ENCODE measurements at regions of chr2 and their contacts with region 1.

Region 1: DNA sequence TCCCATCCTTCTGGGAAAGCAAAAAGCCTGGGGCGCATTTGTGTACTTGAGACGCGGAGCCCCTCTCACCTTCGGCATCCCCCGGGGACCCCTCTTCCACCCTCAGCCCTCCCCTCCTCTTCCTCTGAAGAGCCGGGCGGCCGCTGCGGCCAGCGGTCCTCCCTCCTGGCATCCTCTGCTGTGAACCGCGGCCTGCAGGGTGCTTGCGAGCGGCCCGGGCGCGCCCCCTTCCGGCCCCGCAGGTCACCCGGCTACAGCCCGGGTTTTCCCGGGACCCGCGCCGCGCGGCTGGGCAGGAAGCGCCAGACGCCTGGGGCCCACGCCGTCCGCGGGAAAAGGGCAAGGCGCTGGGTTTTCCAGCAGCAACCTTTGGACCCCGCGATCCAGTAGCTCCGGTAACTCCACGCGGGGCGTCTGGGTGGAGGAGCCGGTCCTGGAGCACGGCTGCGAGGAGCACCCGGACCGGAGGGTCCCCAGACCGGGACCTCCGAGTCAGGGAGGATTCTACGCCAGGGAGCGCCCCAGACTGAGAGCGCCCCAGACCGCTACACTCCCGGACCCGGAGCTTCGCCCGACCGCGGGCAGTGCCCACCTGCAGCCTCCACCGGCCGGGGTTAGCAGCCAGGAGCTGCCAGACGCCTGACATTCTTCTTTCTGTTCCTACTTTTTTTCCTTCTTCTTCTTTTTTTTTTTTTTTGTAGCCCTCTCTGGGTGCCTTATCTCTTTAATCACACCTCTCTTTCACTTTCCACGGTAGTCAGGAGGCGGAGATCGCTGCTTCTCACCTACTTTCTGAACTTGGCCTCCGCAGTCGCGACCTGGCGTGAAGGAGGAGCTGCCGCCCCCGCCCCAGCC is at the start of gene IL18R1:
- DNase-seq: peak; percentile 58 to 80
- H3K4me3 ChIP-seq: peak within 1 kb of the TSS; percentile 89
- H3K27ac ChIP-seq: peak within 1 kb of the TSS; percentile 53
- H3K4me1 ChIP-seq: peaks cover 38% of the 10 kb centered on the region
- H3K27me3 ChIP-seq: no peaks in the 10 kb centered on the region
- CTCF ChIP-seq: peak; percentile 82
- total RNA-seq, gene IL18R1: 1.9 and 3.4 TPM in 2 replicates

Region 2: GRCh38 chr2:101751875-101752619 is 603.7 kb before region 1 on chr2:
- CTCF ChIA-PET with region 1: no interaction called
- POLR2A ChIA-PET with region 1: no interaction called
- intact Hi-C with region 1: no loop called
- DNase-seq: no peak
- H3K4me3 ChIP-seq: no peak overlapping the region
- H3K27ac ChIP-seq: peak overlapping the region; percentile 11; the same call in 1 of the 2 replicates
- H3K4me1 ChIP-seq: peaks cover 38% of the 10 kb centered on the region
- H3K27me3 ChIP-seq: no peaks in the 10 kb centered on the region
- CTCF ChIP-seq: no peak

Region 3: DNA sequence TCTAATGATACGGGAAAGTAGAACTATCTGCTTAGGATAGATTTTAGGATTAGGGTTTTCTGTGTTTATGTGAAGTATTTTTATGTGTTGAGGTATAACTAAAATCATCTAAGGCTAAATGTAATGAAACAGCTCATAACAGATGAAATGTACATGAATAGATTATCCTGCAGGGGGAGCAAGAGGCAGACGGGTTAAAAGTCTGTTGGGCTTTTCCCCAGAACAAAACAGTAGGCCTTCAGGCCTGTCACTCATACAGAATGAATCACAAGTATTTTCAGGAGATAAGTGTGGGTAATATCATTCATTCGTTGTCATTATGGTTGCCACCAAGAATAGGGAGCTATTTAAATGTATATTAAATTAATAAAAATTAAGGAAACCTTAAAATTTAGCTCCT is 471.9 kb before region 1 on chr2:
- CTCF ChIA-PET with region 1: no interaction called
- POLR2A ChIA-PET with region 1: no interaction called
- intact Hi-C with region 1: loop called (anchors 5 kb)
- DNase-seq: peak; percentile 7 to 41
- H3K4me3 ChIP-seq: no peak overlapping the region
- H3K27ac ChIP-seq: no peak overlapping the region
- H3K4me1 ChIP-seq: peaks cover 9% of the 10 kb centered on the region; the same call in 1 of the 2 replicates
- H3K27me3 ChIP-seq: no peaks in the 10 kb centered on the region
- CTCF ChIP-seq: peak; percentile 74

Region 4: GRCh38 chr2:102020596-102021181 is 335.1 kb before region 1 on chr2:
- CTCF ChIA-PET with region 1: no interaction called
- POLR2A ChIA-PET with region 1: no interaction called
- intact Hi-C with region 1: loop called (anchors 5 kb)
- DNase-seq: peak; percentile 53 to 77
- H3K4me3 ChIP-seq: no peak overlapping the region
- H3K27ac ChIP-seq: no peak overlapping the region
- H3K4me1 ChIP-seq: 0 out of 2 replicates have a peak, but pooled peaks cover 4% of the 10 kb centered on the region
- H3K27me3 ChIP-seq: no peaks in the 10 kb centered on the region
- CTCF ChIP-seq: peak; percentile 98

Region 5: GRCh38 chr2:102061962-102062795 is 293.6 kb before region 1 on chr2:
- CTCF ChIA-PET with region 1: interaction called, 12 read pairs
- POLR2A ChIA-PET with region 1: no interaction called
- intact Hi-C with region 1: no loop called
- DNase-seq: no peak
- H3K4me3 ChIP-seq: no peak overlapping the region
- H3K27ac ChIP-seq: no peak overlapping the region
- H3K4me1 ChIP-seq: peaks cover 45% of the 10 kb centered on the region
- H3K27me3 ChIP-seq: no peaks in the 10 kb centered on the region
- CTCF ChIP-seq: no peak

Region 6: GRCh38 chr2:102251042-102251848 is 104.5 kb before region 1 on chr2:
- CTCF ChIA-PET with region 1: interaction called, 4 read pairs
- POLR2A ChIA-PET with region 1: no interaction called
- intact Hi-C with region 1: loop called (anchors 1 kb)
- DNase-seq: peak in 1 of 2 experiments; percentile 69
- H3K4me3 ChIP-seq: peak overlapping the region; percentile 6; the same call in 1 of the 2 replicates
- H3K27ac ChIP-seq: no peak overlapping the region
- H3K4me1 ChIP-seq: peaks cover 9% of the 10 kb centered on the region
- H3K27me3 ChIP-seq: no peaks in the 10 kb centered on the region
- CTCF ChIP-seq: peak; percentile 48

Region 7: GRCh38 chr2:102342891-102343290 is 12.9 kb before region 1 on chr2:
- CTCF ChIA-PET with region 1: no interaction called
- POLR2A ChIA-PET with region 1: no interaction called
- intact Hi-C with region 1: no loop called
- DNase-seq: no peak
- H3K4me3 ChIP-seq: no peak overlapping the region
- H3K27ac ChIP-seq: no peak overlapping the region
- H3K4me1 ChIP-seq: peaks cover 18% of the 10 kb centered on the region
- H3K27me3 ChIP-seq: no peaks in the 10 kb centered on the region
- CTCF ChIP-seq: no peak

Region 8: DNA sequence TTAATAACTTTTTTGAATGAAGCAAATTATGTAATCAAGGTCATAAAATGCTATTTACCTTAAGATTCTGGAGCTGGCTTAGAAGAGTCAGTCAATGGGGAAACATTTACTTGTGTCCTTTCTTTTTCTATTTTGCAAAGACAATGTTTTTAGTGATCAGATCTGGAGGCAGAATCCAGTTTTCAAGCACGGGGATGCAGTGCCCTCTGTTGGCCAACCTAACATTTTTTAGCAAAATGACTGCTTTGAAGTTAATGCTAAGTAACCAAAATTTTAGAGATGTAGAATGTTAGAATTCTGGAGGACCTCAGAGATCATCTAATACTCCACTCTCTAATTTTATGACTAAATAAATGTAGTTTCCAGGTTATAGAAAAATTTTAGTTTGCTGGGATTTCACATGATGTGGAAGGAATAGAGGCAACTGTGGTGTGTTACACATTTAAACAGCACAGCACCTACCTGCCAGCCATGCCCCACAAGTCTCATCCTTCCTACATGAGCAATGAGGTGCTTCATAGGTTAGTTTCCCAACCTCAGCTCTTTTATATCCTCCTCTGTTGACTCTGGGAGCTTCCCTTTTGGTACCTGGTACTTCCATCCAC is 93.7 kb after region 1 on chr2:
- CTCF ChIA-PET with region 1: interaction called, 11 read pairs
- POLR2A ChIA-PET with region 1: no interaction called
- intact Hi-C with region 1: no loop called
- DNase-seq: peak in 1 of 2 experiments; percentile 41
- H3K4me3 ChIP-seq: no peak overlapping the region
- H3K27ac ChIP-seq: no peak overlapping the region
- H3K4me1 ChIP-seq: no peaks in the 10 kb centered on the region
- H3K27me3 ChIP-seq: no peaks in the 10 kb centered on the region
- CTCF ChIP-seq: peak; percentile 83

Region 9: DNA sequence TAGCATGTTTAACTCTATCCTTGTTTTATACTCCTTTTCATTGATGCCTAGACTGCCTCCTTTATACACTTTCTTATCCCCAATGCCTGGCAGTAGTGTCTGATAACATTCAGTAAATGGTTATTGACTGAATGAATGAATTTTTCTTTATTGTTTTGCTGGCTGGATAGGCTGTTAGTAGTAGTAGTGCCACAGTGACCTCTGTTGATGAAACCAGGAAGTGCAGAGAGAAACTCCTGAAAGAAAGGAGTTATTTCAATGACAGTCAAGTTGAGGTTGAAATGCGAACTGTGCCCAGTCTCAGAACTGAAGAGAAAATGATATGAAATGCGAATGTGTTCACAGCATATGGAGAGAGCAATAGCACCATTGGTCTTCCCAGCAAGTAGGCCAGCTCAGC is 236.8 kb after region 1 on chr2:
- CTCF ChIA-PET with region 1: no interaction called
- POLR2A ChIA-PET with region 1: interaction called, 10 read pairs
- intact Hi-C with region 1: no loop called
- DNase-seq: peak in 1 of 2 experiments; percentile 21
- H3K4me3 ChIP-seq: no peak overlapping the region
- H3K27ac ChIP-seq: no peak overlapping the region
- H3K4me1 ChIP-seq: peaks cover 32% of the 10 kb centered on the region
- H3K27me3 ChIP-seq: no peaks in the 10 kb centered on the region
- CTCF ChIP-seq: peak; percentile 71

Measured in PC-9 (cell line).